ENCODE measurements at regions of chr7 and their contacts with region 1.

Region 1: DNA sequence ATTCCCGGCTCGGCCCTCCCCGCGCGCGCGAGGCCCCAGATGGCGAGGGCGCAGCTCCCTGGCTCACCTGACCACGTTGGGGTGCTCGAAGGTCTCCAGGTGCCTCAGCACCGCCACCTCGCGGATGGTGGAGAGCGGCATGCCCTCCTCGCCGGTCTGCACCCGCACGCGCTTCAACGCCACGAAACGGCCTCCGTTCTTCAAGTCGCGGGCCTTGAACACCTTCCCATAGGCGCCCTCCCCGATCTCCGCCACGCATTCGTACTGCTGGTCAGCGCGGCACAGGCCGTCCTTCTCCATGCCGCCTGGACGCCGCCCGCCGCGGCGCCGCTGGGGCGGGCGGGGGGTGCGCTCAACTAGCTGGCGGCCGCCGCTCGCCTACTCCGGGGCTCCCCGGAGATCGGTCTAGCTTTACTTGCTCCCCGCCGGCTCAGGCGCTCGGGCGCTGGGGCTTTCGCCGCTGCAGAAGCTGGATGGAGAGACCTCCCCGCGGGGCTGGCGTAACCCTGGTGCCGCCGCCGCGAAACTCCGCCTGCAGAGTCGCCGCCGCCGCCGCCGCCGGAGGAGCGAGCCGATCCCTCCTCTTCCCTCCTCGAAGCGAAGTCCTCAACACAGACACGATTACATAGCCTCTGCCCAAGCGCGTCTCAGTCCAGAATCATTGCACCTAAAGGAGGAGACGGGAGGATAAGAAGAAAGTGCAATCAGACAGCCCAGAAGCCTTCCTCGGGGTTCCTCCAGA is 3.2 kb downstream of the CDK6 start:
- DNase-seq: peak; percentile 82 to 94 (median 90)
- H3K4me3 ChIP-seq: peak overlapping the region; percentile 74 to 90 (median 84)
- H3K27ac ChIP-seq: peak overlapping the region; percentile 57 to 91 (median 89)
- H3K4me1 ChIP-seq: peaks cover 19 to 46% of the 10 kb centered on the region in 2 donors
- H3K27me3 ChIP-seq: no peaks in the 10 kb centered on the region
- CTCF ChIP-seq: peak; percentile 65 to 93 (median 83)
- POLR2A ChIP-seq: no peak

Region 2: DNA sequence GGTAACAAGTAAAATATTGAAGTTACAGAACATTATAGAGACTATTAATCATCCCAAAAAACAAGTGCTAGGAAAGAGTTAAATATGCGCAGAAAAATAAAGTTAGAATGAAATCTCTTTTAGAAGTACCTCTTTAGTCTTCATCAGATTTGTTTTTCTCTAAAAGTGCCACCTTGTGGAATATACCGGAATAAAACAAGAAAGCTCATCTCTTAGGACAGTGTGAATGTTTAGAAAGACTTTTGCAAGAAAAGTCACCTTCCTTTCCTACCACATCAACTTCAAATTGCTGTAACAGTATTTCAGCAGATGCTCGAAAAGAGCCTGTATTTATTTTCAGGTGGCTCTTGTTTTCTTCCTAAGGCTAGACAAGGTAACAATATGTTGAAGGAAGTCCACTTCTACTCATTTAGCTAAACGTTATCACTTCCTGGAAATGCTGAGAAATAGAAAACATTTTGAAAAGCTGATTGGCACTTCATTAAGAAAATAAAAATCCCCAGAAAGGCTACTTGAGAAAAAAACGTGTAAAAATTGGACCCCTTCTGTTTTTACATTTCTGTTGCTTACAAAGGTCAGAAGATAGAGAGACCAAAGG is 223.2 kb before region 1 on chr7:
- intact Hi-C with region 1: loop called in 1 of 2 experiments (anchors 5 kb)
- DNase-seq: no peak
- H3K4me3 ChIP-seq: no peak overlapping the region
- H3K27ac ChIP-seq: no peak overlapping the region
- H3K4me1 ChIP-seq: peaks cover 15 to 39% of the 10 kb centered on the region in 2 donors
- H3K27me3 ChIP-seq: no peaks in the 10 kb centered on the region
- CTCF ChIP-seq: peak in 5 of 6 experiments; percentile 29 to 52 (median 47)
- POLR2A ChIP-seq: no peak

Region 3: DNA sequence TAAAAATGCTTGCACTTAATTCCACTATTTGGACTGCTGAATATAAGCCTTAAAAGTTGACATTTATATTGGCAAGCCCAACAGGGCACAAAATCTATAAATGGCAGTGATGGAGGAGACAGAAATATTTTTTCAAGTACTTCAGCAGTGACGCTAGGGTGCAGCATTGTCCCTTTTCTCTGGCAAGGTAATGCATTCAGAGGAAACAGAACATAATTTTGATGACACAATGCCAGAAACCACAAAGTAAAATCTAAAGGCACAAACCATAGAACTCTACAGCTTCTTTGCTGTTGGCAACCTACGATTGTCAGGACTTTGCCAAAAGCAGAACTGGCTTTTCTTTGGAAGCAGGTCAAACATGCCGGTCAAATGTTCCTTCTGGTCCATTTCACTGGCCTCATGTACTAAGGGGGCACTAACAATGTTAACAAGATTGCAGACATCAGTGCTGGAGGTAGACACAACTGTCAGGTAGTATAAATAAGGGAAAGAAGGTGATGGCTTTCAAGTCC is 212.1 kb before region 1 on chr7:
- intact Hi-C with region 1: loop called (anchors 5 to 10 kb)
- DNase-seq: peak; percentile 70 to 85 (median 78)
- H3K4me3 ChIP-seq: no peak overlapping the region
- H3K27ac ChIP-seq: peak overlapping the region in 3 of 5 donors; percentile 33 to 68 (median 63)
- H3K4me1 ChIP-seq: peaks cover 6 to 23% of the 10 kb centered on the region in 2 donors
- H3K27me3 ChIP-seq: no peaks in the 10 kb centered on the region
- CTCF ChIP-seq: peak; percentile 67 to 91 (median 88)
- POLR2A ChIP-seq: no peak

Region 4: DNA sequence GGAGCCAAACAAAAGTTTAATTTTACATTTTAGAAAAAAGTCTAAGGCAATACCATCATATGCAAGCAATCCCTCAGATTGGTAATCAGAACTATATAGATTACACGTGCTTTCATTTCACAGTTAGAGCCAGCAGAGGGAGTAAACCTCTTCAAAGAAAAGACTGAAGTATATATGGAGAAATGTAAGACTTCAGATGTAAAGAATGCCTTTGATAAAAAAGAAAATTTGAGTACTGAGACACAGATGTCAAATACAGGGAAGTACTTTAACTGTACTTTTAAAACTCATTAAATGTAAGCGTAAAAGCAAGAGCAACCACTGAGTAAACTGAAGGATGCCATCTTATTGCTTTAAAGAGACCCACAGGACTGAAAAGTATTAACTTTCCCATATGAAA is 141.6 kb before region 1 on chr7:
- intact Hi-C with region 1: loop called in 1 of 2 experiments (anchors 5 kb)
- DNase-seq: peak in 1 of 7 donors; percentile 17
- H3K4me3 ChIP-seq: no peak overlapping the region
- H3K27ac ChIP-seq: no peak overlapping the region
- H3K4me1 ChIP-seq: peaks cover 9 to 34% of the 10 kb centered on the region in 2 donors
- H3K27me3 ChIP-seq: no peaks in the 10 kb centered on the region
- CTCF ChIP-seq: peak; percentile 18 to 65 (median 55)
- POLR2A ChIP-seq: no peak

Region 5: DNA sequence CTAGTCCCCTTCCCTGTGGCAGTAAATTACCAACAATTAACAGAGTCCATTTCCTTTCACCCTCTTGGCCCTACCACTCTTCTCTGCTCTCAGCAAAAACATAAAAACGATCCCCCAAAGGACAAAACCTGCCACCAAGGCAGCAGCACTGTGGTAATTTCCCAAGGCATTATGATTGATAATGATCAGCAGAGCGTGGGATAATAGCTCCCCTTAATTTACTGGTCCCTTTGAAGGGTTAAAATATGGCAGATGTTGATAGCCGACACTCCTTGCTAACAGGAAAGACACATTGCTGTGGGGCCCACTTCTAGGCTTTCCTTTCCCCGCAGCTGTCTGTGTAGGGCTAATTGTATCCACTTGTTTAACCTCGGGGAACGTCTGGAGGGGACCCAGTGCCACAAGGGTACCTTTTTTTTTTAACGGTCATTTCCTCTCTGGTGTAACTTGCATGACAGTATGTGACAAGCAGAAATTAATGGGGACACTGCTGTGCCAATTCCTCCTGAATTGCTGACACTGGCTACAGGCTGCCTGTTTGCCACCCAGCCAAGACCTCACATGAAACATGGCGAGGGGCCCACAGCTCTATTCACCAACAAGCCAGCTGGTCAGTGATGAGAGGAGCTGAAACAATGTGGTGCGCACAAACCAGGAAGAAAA is 78.1 kb before region 1 on chr7:
- intact Hi-C with region 1: no loop called
- DNase-seq: peak in 1 of 7 donors; percentile 34
- H3K4me3 ChIP-seq: no peak overlapping the region
- H3K27ac ChIP-seq: peak overlapping the region in 1 of 5 donors; percentile 22
- H3K4me1 ChIP-seq: peaks cover 13 to 14% of the 10 kb centered on the region in 2 donors
- H3K27me3 ChIP-seq: no peaks in the 10 kb centered on the region
- CTCF ChIP-seq: no peak
- POLR2A ChIP-seq: no peak

Region 6: DNA sequence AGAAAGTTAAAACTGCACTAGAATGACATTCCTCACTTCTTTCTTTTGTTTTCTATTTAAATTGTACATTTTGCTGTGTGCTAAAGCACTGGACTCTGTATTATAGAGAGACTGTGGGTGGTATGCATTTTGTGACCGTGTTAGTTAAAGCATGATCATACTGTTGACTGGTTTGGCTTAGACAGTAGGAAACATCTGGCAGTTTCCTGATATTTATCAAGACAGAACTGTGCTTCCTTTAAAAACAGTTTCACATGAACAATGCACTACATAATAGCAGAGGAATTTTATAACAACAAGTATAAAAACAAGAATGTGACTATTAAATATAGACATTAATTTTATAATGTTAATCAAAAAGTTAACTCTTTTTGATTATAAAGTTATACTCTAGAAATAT is 1111.5 kb after region 1 on chr7:
- intact Hi-C with region 1: no loop called
- DNase-seq: no peak
- H3K4me3 ChIP-seq: no peak overlapping the region
- H3K27ac ChIP-seq: no peak overlapping the region
- H3K4me1 ChIP-seq: peaks cover 4 to 10% of the 10 kb centered on the region in 2 donors
- H3K27me3 ChIP-seq: no peaks in the 10 kb centered on the region
- CTCF ChIP-seq: no peak
- POLR2A ChIP-seq: no peak

Measured in adrenal gland (tissue), 19 donors.